ENCODE measurements at regions of chr7 and their contacts with region 1.

Region 1: GRCh38 chr7:129875745-129876411 is 76.9 kb downstream of the UBE2H start:
- DNase-seq: peak; percentile 67
- ATAC-seq: peak; percentile 73
- H3K4me3 ChIP-seq: peak overlapping the region; percentile 25; the same call in 1 of the 2 replicates
- H3K27ac ChIP-seq: peak overlapping the region; percentile 12; the same call in 1 of the 2 replicates
- H3K4me1 ChIP-seq: peaks cover 24% of the 10 kb centered on the region
- H3K27me3 ChIP-seq: no peaks in the 10 kb centered on the region
- CTCF ChIP-seq: no peak

Region 2: GRCh38 chr7:129845178-129845971 is 30.5 kb before region 1 on chr7:
- CTCF ChIA-PET with region 1: no interaction called
- POLR2A ChIA-PET with region 1: no interaction called
- intact Hi-C with region 1: loop called (anchors 5 kb)
- DNase-seq: peak; percentile 68
- ATAC-seq: peak; percentile 53
- H3K4me3 ChIP-seq: peak overlapping the region; percentile 26; the same call in 1 of the 2 replicates
- H3K27ac ChIP-seq: peak overlapping the region; percentile 94
- H3K4me1 ChIP-seq: peaks cover 35% of the 10 kb centered on the region
- H3K27me3 ChIP-seq: no peaks in the 10 kb centered on the region
- CTCF ChIP-seq: no peak

Region 3: DNA sequence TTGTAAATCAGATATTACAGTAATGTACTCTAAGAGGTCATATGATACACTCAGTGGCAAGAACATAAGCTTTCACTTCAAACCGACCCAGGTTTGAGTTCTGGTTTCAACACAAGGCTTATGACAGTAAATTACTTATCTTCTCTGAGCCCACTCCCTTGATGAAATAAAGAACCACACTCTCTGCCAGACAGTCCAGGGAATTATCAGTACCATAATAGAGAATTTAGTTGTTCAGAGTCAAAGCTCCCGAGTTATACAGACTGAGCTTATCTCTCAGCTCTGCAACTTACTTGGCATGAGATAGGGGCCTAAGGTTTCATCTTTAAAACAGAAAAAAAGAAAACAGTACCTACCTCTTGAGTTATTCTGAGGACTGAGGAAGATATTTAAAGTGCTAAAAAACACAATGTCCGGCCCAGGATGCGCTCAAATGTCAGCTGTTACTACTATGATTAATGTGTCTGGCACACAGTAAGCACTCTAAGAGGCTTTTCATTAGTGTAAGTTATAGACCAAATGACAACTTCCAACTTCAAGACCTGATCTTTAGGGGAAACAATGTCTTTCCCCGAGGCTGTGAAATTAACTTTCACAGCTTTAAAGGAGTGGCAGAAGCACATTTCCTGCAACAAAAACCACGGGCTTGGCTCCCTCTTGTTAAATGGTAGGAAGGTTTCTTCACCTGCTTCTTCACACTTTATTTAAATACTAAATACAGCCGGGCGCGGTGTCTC is 38.8 kb after region 1 on chr7:
- CTCF ChIA-PET with region 1: no interaction called
- POLR2A ChIA-PET with region 1: no interaction called
- intact Hi-C with region 1: loop called (anchors 5 kb)
- DNase-seq: no peak
- ATAC-seq: peak; percentile 17; the same call in 1 of the 2 replicates
- H3K4me3 ChIP-seq: no peak overlapping the region
- H3K27ac ChIP-seq: no peak overlapping the region
- H3K4me1 ChIP-seq: peaks cover 19% of the 10 kb centered on the region
- H3K27me3 ChIP-seq: no peaks in the 10 kb centered on the region
- CTCF ChIP-seq: no peak